Heart left ventricle (tissue), 16 donors: ENCODE measurements at regions of chr19 and their contacts with region 1.

Region 1: DNA sequence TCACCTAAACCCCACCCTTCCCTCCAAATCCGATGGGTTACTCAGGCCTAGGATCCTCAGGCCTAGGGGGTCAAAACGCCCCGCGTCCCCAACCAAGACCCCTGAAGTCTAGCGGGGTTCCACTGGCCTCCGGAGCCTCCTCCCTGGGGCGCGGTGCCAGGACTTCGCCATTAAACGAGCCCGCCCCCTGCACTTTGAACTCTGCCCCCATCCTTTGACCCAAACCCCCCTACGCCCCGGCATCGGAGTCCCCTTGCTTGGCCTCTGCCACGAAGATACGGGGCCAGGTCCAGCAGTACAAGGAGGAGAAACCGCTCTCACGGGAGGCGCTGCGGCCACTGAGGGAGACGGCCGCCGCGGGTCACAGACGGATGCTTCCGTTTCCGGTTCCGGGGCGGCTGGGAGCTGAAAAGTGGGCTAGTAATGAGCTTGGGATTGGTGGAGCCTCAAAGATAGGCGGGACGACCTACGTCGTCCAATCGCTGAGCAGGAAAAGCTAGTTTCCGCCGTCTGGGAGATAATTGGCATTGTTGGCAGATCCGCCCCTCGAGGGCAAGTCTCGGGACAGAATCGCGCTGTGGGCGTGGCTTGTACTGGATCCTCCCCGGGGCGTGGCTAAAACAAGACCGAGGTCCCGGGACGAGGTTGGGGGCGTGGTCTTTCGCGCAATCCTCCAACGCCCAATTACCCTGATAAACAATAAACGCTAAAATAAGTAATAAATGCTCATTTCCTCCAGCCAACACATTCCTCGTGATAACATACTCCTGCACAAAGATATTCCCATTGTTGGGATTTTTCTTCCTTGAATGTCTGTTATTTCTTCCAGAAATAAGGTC is 5.7 kb upstream of the ZNF77 start:
- DNase-seq: peak; percentile 100
- ATAC-seq: peak; percentile 96 to 98 (median 97)
- H3K4me3 ChIP-seq: peak overlapping the region; percentile 41 to 93 (median 80)
- H3K27ac ChIP-seq: peak overlapping the region; percentile 89 to 99 (median 96)
- H3K4me1 ChIP-seq: peaks cover 0 to 20% (median 14%) of the 10 kb centered on the region in 12 donors
- H3K27me3 ChIP-seq: no peaks in the 10 kb centered on the region
- CTCF ChIP-seq: no peak
- POLR2A ChIP-seq: peak in 1 of 2 donors; percentile 90

Region 2: DNA sequence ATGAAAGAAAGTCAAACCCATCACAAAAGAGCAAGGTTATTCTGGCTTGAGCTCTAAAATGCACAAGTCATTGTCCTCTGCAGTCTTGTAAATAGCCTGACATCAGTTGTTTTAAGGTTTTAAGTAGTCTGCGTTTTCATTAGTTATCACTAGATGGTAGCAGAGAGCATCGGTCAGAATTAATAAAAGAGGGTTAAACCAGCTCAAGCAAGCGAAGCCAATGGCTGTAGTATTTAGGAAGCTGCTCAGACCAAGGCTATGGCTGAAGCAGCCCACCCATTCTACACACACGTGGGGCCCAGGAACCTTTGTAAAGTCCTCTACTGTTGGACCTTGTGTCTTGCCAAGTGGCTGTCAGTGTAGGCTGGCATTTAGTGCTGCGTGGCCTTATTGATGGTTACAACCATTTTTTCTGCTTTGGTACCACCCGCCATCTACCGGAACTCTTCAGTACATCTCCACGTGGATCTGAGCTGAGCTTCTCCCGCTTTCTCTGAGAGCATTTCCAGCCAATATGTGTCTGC is 63.1 kb before region 1 on chr19:
- intact Hi-C with region 1: loop called in 3 of 10 experiments (anchors 5 to 10 kb)
- DNase-seq: no peak
- ATAC-seq: peak; percentile 57 to 74 (median 73)
- H3K4me3 ChIP-seq: no peak overlapping the region
- H3K27ac ChIP-seq: no peak overlapping the region
- H3K4me1 ChIP-seq: peaks cover 0 to 6% (median 0%) of the 10 kb centered on the region in 12 donors
- H3K27me3 ChIP-seq: no peaks in the 10 kb centered on the region
- CTCF ChIP-seq: peak; percentile 56 to 77 (median 64)
- POLR2A ChIP-seq: no peak

Region 3: DNA sequence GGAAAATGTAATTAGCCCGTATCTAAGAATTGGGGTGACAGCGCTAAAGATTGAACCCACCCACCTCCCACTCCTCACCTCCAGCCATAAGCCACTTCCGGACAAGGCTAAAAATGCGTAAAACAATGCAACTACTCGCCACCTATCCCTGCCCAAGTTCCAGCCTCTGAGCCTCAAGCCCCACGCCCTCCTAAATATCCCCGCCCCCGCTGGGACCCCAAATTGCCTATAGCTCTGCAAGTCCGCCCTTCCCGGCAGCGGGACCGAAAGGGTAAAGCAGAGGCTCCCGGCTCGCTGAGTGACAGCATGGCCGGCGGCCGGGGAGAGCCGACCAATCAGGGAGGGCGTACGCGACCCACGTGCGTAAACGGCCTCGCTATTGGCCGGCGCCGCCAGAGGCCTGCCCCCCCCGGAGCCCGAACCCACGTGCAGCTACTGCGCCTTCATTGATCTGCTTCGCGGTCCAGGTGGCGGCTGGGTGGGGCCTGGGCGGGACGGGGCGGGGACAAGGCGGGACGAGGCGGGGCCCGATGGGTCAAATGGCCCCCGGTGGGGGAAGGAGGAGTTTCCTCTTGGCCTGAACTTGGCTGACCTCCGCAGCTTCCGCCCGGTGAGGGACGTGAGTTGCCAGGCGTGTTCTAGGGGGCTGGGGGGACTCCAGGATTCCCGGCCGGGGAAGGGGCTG is 26.6 kb after region 1 on chr19 and contains the start of gene TLE6:
- intact Hi-C with region 1: loop called in 1 of 10 experiments (anchors 1 kb)
- DNase-seq: peak; percentile 96 to 99 (median 98)
- ATAC-seq: peak; percentile 96 to 97 (median 96)
- H3K4me3 ChIP-seq: peak within 1 kb of the TSS; percentile 11 to 73 (median 59)
- H3K27ac ChIP-seq: peak within 1 kb of the TSS in 9 of 12 donors; percentile 31 to 73 (median 55)
- H3K4me1 ChIP-seq: peaks cover 13 to 62% (median 48%) of the 10 kb centered on the region in 12 donors
- H3K27me3 ChIP-seq: no peaks in the 10 kb centered on the region
- CTCF ChIP-seq: no peak
- POLR2A ChIP-seq: peak in 1 of 2 donors; percentile 22
- total RNA-seq, gene TLE6: 0.21 to 1.3 (median 0.57) TPM in 8 of 9 donors, not detected in the other

Region 4: DNA sequence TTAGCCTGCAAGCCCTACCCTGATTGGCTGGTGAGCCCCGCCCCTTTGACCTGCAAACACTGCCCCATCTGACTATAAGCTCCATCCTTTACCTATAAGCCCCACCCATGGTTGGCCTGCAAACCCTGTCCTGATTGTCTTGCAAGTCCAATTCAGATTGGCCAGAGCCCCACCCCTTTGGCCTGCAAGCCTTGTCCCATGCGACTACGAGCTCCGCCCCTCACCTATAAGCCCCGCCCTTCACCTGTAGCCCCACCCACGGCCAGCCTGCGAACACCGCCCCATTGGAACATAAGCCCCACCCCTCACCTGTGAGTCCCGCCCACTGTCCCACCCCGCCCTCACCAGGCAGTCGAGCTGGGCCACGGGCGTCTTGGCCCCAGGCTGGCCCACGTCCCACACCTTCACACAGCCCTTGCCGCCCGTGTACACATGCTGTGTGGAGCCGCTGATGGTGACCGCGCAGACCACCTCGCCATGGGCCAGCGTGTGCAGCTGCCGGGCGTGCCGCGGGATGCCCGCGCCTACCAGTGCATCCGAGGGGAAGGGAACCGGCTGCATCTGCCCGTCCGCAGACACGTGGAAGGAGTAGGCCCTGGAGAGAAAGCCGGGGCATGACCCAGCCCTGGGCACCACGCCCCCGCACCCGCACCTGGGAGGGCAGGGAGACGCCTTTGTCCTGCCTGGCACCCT is 55.7 kb after region 1 on chr19:
- intact Hi-C with region 1: no loop called
- DNase-seq: no peak
- ATAC-seq: peak in 1 of 4 donors; percentile 20
- H3K4me3 ChIP-seq: no peak overlapping the region
- H3K27ac ChIP-seq: no peak overlapping the region
- H3K4me1 ChIP-seq: no peaks in the 10 kb centered on the region
- H3K27me3 ChIP-seq: no peaks in the 10 kb centered on the region
- CTCF ChIP-seq: no peak
- POLR2A ChIP-seq: no peak

Region 5: GRCh38 chr19:3075895-3076431 is 125.5 kb after region 1 on chr19:
- intact Hi-C with region 1: loop called in 1 of 10 experiments (anchors 10 kb)
- DNase-seq: peak in 2 of 5 donors; percentile 52 to 79
- ATAC-seq: peak; percentile 24 to 76 (median 73)
- H3K4me3 ChIP-seq: peak overlapping the region in 3 of 12 donors; percentile 15 to 29 (median 29)
- H3K27ac ChIP-seq: no peak overlapping the region
- H3K4me1 ChIP-seq: peaks cover 0 to 14% (median 4%) of the 10 kb centered on the region in 12 donors
- H3K27me3 ChIP-seq: no peaks in the 10 kb centered on the region
- CTCF ChIP-seq: peak; percentile 86 to 95 (median 90)
- POLR2A ChIP-seq: no peak

Region 6: GRCh38 chr19:3108775-3109174 is 158.3 kb after region 1 on chr19:
- intact Hi-C with region 1: loop called in 7 of 10 experiments (anchors 2 to 10 kb)
- DNase-seq: peak in 2 of 5 donors; percentile 61 to 69
- ATAC-seq: peak in 2 of 4 donors; percentile 34 to 50
- H3K4me3 ChIP-seq: no peak overlapping the region
- H3K27ac ChIP-seq: no peak overlapping the region
- H3K4me1 ChIP-seq: peaks cover 1 to 53% (median 19%) of the 10 kb centered on the region in 12 donors
- H3K27me3 ChIP-seq: no peaks in the 10 kb centered on the region
- CTCF ChIP-seq: peak; percentile 69 to 87 (median 78)
- POLR2A ChIP-seq: no peak

Region 7: GRCh38 chr19:3163230-3163886 is 212.9 kb after region 1 on chr19:
- intact Hi-C with region 1: loop called in 5 of 10 experiments (anchors 2 to 10 kb)
- DNase-seq: peak; percentile 51 to 86 (median 67)
- ATAC-seq: peak; percentile 65 to 91 (median 88)
- H3K4me3 ChIP-seq: no peak overlapping the region
- H3K27ac ChIP-seq: no peak overlapping the region
- H3K4me1 ChIP-seq: peaks cover 0 to 38% (median 0%) of the 10 kb centered on the region in 12 donors
- H3K27me3 ChIP-seq: no peaks in the 10 kb centered on the region
- CTCF ChIP-seq: peak; percentile 87 to 98 (median 94)
- POLR2A ChIP-seq: no peak